ENCODE measurements at regions of chr2 and their contacts with region 1.

Region 1: GRCh38 chr2:108583903-108584520 is 49.7 kb downstream of the LIMS1 start:
- DNase-seq: peak in 3 of 6 donors; percentile 45 to 66 (median 63)
- ATAC-seq: peak; percentile 77 to 90 (median 84)
- H3K4me3 ChIP-seq: no peak overlapping the region
- H3K27ac ChIP-seq: no peak overlapping the region
- H3K4me1 ChIP-seq: peaks cover 15 to 24% (median 17%) of the 10 kb centered on the region in 3 donors
- H3K27me3 ChIP-seq: no peaks in the 10 kb centered on the region
- CTCF ChIP-seq: peak; percentile 44 to 66 (median 64)

Region 2: GRCh38 chr2:108351889-108352288 is 232.1 kb before region 1 on chr2:
- intact Hi-C with region 1: loop called in 2 of 3 experiments (anchors 5 to 10 kb)
- DNase-seq: no peak
- ATAC-seq: peak in 1 of 4 donors; percentile 32
- H3K4me3 ChIP-seq: no peak overlapping the region
- H3K27ac ChIP-seq: no peak overlapping the region
- H3K4me1 ChIP-seq: no peaks in the 10 kb centered on the region
- H3K27me3 ChIP-seq: no peaks in the 10 kb centered on the region
- CTCF ChIP-seq: no peak